Motor neuron (in vitro differentiated cells): ENCODE measurements at regions of chr3 and their contacts with region 1.

Region 1: DNA sequence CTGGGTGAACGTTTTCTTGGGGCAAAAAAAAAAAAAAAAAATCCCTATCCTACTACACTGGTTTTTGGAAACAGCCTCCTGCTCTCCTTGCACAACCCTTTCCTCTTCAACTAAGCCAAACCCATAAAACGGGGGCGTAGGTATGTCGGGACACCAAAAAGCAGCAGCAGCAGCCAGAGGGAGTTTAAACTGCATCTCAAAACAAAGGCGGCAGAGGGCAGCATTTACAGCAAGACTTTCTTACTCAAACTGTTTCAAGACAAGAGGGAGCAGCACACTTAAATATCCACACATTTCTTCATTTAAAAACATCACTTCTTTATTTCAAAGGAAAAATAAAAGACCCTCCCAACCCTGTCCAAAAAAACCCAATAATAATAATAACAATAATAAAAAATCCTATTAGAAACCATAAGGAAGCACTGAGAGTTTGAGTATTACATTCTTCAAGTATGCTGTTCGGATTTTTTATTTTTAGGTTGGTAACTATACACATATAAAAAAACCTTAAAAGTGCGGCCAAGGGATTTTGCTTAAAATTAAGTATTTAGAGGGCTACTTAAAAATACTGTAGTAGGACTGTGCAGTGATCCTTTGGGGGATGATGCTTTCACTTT is 43.9 kb upstream of the PLXND1 start:
- ATAC-seq: peak in 3 of 8 experiments; percentile 20 to 32 (median 24)
- H3K4me3 ChIP-seq: no peak overlapping the region
- H3K27ac ChIP-seq: no peak overlapping the region
- H3K4me1 ChIP-seq: peaks cover 6 to 10% of the 10 kb centered on the region in 2 donors

Region 2: GRCh38 chr3:129812589-129812988 is 162.2 kb after region 1 on chr3:
- in situ Hi-C with region 1: loop called in 3 of 9 experiments (anchors 10 to 25 kb)
- ATAC-seq: no peak
- H3K4me3 ChIP-seq: no peak overlapping the region
- H3K27ac ChIP-seq: no peak overlapping the region
- H3K4me1 ChIP-seq: no peaks in the 10 kb centered on the region